AG04450 (cell line): ENCODE measurements at regions of chr11 and their contacts with region 1.

Region 1: GRCh38 chr11:62694455-62695167 is 5.3 kb upstream of the LRRN4CL start:
- DNase-seq: peak; percentile 55
- H3K4me3 ChIP-seq: no peak overlapping the region
- H3K27ac ChIP-seq: no peak overlapping the region
- H3K27me3 ChIP-seq: no peaks in the 10 kb centered on the region
- CTCF ChIP-seq: peak; percentile 90

Region 2: DNA sequence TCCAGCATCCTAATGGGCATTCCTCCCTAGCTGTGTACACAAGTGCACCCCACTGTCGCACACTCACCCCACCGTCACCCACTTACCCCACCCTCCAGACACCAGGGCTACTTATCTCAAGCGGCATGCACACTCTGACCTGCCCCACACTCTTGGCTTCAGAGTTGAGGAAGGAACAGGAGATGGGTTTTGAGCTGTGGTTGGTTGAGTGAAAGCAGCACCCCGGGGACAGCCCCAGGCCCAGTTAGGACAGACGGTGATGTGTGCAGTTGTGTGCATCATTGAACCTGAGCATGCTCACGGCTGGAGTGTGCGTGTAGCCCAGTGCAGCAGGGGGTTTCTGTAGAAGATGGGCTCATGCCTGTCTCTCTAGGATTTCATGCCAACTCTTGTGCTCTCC is 180.5 kb before region 1 on chr11:
- CTCF ChIA-PET with region 1: no interaction called
- POLR2A ChIA-PET with region 1: no interaction called
- DNase-seq: no peak
- H3K4me3 ChIP-seq: no peak overlapping the region
- H3K27ac ChIP-seq: no peak overlapping the region
- H3K27me3 ChIP-seq: no peaks in the 10 kb centered on the region
- CTCF ChIP-seq: no peak

Region 3: DNA sequence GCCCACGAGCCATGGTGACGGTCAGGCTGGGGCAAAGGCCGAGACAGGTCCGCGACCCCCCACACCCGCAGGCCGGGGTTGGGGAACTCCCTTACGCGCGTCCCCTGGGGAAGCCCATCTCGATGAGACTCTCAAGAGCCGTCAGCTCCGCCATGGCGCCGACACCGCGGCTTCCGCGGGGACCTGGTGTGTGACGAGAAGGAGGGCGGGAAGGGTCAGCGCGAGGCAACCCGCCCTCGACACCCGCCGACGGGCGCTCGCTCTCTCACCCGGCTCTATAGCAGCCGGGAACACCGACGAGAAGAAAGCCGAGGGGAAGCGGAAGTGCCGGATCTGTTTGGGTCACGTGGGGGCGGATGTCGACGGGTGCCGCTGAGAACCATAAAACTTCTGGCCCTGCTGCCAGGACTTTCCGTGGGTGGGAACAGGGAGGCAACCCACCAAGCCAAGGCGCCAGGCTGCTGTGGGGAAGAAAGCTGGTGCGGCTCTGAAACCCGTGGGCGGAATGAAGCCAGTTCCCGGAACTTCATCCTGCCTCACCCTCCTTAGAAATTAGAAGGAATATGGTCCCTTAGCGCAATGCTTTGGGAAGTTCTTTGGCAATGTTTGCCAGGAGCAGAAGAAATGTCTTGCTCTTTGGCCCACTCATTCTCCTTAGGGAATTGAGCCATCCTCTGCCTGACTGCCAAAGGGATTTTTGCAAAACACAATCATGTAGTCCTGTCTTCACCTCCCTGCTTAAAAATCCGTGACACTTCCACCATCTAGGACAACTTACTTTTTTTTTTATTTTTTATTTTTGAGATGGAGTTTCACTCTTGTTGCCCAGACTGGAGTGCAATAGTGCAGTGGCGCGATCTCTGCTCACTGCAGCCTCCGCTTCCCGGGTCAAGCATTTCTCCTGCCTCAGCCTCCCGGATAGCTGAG is 15.6 kb before region 1 on chr11 and contains the start of gene UBXN1:
- CTCF ChIA-PET with region 1: interaction called, 36 read pairs
- POLR2A ChIA-PET with region 1: interaction called, 18 read pairs
- DNase-seq: peak; percentile 66
- H3K4me3 ChIP-seq: peak within 1 kb of the TSS; percentile 98
- H3K27ac ChIP-seq: peak within 1 kb of the TSS; percentile 80
- H3K27me3 ChIP-seq: no peaks in the 10 kb centered on the region
- CTCF ChIP-seq: no peak
- polyA plus RNA-seq, gene UBXN1: 92.8 and 100 TPM in 2 replicates

Region 4: DNA sequence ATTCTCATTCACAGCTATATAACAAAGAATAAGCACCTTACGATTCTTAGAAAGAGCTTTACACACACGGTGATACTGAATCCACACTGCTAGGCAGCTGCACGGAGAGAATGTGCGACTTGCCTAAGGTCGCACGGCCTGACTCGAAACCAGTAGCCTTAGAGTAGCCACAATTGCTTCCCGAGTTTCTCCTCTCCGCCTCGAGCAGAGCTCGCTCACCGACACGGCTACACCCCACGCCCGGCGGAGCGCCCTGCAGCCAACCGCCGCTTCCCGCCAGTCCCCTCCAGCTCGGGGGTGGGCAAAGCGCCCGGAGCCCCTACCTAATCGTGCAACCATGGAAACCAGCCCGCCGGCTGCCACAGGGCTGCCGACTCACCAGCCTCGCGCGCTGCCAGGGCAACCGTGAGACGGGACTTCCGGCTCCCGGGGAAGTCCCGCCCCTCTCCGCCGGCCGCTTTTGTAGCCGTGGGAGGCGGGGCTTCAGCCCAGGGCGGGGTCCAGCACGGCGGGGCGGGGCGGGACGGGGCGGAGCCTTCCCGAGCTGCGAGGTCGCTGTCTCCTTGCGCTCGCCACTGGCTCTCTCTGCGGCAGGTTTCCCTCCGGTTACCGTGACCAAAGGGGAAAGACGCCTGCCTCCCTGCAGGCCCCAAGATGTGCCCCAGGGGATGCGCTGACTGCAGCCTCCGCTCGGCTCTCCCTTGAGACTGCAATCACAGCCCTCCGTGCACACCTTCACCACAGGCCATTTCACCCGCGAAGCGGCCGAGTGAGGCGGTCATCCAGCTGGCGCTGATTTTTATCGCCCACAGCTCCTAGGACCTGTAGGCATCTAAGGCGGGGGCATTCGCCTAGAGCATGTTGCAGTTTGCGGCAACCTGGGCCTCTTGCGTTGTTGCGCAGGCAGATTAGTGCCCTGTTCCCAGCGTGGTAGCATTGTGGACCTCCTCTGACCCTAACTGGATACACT is 11.6 kb after region 1 on chr11:
- CTCF ChIA-PET with region 1: interaction called, 22 read pairs
- POLR2A ChIA-PET with region 1: interaction called, 17 read pairs
- DNase-seq: peak; percentile 79
- H3K4me3 ChIP-seq: peak overlapping the region; percentile 76
- H3K27ac ChIP-seq: peak overlapping the region; percentile 86
- H3K27me3 ChIP-seq: no peaks in the 10 kb centered on the region
- CTCF ChIP-seq: no peak

Region 5: GRCh38 chr11:62721994-62722393 is 27.4 kb after region 1 on chr11:
- CTCF ChIA-PET with region 1: interaction called, 3 read pairs
- POLR2A ChIA-PET with region 1: interaction called, 11 read pairs
- DNase-seq: no peak
- H3K4me3 ChIP-seq: no peak overlapping the region
- H3K27ac ChIP-seq: no peak overlapping the region
- H3K27me3 ChIP-seq: no peaks in the 10 kb centered on the region
- CTCF ChIP-seq: 0 out of 2 replicates have a peak, but pooled peaks have one; percentile 26

Region 6: DNA sequence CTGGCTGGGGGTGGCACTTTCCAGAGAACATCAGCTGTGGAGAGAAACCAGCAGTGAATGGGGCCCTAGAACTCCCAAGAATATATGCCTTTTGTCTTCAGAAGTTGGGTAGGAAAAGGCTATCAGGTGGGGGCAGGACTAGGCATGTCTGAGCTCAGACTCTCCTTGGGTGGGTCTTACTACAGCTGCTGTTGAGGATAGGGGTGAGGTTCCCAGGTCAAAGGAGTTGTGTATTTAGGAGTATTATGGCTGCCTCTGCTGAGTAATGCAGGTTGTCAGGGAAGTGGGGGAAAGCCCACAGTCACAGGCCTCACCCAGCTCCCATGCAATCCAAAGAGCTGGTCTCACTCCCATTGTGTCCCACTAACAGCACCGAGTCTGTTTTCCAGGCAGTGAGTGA is 701.1 kb after region 1 on chr11:
- CTCF ChIA-PET with region 1: no interaction called
- POLR2A ChIA-PET with region 1: no interaction called
- DNase-seq: no peak
- H3K4me3 ChIP-seq: no peak overlapping the region
- H3K27ac ChIP-seq: no peak overlapping the region
- H3K27me3 ChIP-seq: no peaks in the 10 kb centered on the region
- CTCF ChIP-seq: no peak